Left ventricle myocardium inferior (tissue), 1 donor: ENCODE measurements at regions of chr2 and their contacts with region 1.

Region 1: DNA sequence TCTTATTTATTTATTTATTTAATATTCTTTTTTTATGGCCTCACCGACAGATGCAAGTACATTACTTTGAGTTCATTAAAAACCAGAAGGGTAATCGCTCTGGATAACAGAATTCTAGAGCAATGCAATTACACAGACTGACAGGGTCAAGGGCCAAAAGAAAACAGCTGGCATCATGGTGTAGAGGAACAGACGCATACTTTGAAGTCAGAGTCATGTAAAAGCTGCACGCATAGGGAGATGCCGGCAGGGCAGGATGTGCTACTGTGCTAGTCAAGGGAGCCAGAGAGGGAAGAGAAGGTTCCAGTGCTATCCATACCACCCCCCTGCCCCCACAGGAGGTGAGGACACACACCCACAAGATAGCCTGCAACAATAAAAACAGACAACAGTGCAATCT is 115.2 kb upstream of the TFCP2L1 start:
- DNase-seq: no peak
- H3K4me3 ChIP-seq: no peak overlapping the region
- H3K27ac ChIP-seq: no peak overlapping the region
- H3K4me1 ChIP-seq: no peaks in the 10 kb centered on the region
- H3K27me3 ChIP-seq: no peaks in the 10 kb centered on the region
- CTCF ChIP-seq: no peak

Region 2: DNA sequence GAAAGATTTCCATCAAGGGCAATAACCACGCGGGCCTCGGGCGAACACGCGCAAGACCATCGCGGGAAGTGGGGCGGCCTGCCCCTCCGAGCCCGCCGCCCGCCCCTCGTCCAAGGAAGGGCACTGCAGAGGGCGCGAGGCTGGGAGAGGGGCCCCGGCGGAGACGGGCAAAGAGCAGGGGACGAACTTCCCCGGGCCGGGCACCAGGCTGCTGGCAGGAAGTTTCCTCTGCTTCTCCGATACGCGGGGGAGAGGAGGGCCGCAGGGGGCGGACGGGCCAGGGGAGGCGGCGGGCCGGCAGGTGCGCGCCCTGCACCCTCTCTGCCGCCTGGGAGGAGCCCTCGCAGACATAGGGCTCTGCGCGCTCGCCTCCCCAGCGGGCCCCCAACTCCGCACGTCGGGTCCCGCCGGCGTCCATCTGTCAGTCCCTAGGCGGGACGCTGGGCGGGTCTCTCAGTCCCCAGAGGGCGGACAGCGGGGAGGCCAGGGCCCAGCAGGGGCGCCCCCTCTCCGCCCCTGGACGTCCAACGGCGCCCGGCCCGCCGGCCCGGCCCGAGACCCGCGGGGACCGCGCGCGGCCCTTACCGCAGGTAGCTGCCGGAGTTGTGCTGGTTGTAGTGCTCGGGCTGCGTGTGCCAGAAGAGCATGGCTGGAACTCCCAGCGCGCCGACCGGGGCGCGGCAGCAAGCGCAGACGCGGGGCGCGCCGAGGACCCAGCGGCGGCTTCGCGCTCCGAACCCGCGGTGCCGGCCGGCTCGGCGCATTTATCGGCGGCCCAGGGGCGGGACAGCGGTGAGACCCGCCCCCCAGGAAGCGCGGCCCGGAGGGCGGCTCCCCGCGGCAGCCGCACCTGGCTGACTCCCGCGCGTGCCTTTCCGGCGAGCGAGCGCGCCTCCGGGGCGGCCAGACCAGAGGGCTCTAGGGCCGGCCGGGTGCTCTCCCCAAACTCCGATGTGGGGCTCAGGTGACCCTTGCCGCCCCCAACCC is 115.4 kb before region 1 on chr2 and contains the start of gene TFCP2L1:
- intact Hi-C with region 1: no loop called
- DNase-seq: no peak
- H3K4me3 ChIP-seq: peak within 1 kb of the TSS; percentile 66
- H3K27ac ChIP-seq: no peak within 1 kb of the TSS
- H3K4me1 ChIP-seq: peaks cover 13% of the 10 kb centered on the region
- H3K27me3 ChIP-seq: peaks cover 59% of the 10 kb centered on the region
- CTCF ChIP-seq: no peak
- total RNA-seq, gene TFCP2L1: 0.14 TPM

Region 3: DNA sequence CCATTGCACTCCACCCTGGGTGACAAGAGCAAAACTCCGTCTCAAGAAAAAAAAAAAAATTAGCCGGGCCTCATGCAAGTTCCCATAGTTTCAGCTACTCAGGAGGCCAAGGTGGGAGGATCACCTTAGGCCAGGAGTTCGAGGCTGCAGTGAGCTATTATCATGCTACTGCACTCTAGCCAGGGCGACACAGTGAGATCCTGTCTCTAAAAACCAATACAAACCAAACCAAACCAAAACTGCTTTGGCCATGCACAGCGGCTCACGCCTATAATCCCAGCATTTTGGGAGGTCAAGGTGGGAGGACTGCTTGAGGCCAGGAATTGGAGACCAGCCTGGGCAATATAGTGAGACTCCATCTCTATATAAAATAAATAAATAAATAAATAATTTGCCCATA is 317.3 kb after region 1 on chr2:
- intact Hi-C with region 1: loop called (anchors 5 kb)
- DNase-seq: no peak
- H3K4me3 ChIP-seq: no peak overlapping the region
- H3K27ac ChIP-seq: no peak overlapping the region
- H3K4me1 ChIP-seq: peaks cover 24% of the 10 kb centered on the region
- H3K27me3 ChIP-seq: no peaks in the 10 kb centered on the region
- CTCF ChIP-seq: no peak